Naive thymus-derived CD4-positive, alpha-beta T cell (primary cell): ENCODE measurements at regions of chr6 and their contacts with region 1.

Region 1: DNA sequence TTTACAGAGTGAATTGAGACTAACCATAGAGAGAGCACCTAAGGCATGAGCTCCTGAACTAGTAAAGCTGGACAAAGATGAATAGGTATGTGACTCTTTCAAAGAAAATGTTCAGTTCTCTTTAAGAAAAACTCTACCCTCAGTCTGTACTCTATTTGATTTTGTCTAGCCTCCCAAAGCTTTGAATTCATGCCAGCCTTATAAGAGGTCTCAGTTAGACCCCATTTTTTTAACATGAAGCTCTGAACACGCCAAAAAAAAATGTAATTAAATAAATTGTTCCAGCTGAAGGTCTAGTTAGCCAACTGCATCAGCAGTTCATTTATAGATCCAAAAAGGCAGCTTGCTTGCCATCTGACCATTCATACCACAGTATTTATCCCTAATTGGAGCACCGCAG is 71.6 kb downstream of the COL9A1 start:
- DNase-seq: no peak
- ATAC-seq: no peak
- H3K4me3 ChIP-seq: no peak overlapping the region
- H3K4me3 Mint-ChIP-seq: no peak overlapping the region
- H3K27ac ChIP-seq: no peak overlapping the region
- H3K27ac Mint-ChIP-seq: no peak overlapping the region
- H3K4me1 ChIP-seq: no peaks in the 10 kb centered on the region
- H3K4me1 Mint-ChIP-seq: no peaks in the 10 kb centered on the region
- H3K27me3 ChIP-seq: no peaks in the 10 kb centered on the region
- H3K27me3 Mint-ChIP-seq: peaks cover 0 to 10% (median 0%) of the 10 kb centered on the region in 5 donors

Region 2: DNA sequence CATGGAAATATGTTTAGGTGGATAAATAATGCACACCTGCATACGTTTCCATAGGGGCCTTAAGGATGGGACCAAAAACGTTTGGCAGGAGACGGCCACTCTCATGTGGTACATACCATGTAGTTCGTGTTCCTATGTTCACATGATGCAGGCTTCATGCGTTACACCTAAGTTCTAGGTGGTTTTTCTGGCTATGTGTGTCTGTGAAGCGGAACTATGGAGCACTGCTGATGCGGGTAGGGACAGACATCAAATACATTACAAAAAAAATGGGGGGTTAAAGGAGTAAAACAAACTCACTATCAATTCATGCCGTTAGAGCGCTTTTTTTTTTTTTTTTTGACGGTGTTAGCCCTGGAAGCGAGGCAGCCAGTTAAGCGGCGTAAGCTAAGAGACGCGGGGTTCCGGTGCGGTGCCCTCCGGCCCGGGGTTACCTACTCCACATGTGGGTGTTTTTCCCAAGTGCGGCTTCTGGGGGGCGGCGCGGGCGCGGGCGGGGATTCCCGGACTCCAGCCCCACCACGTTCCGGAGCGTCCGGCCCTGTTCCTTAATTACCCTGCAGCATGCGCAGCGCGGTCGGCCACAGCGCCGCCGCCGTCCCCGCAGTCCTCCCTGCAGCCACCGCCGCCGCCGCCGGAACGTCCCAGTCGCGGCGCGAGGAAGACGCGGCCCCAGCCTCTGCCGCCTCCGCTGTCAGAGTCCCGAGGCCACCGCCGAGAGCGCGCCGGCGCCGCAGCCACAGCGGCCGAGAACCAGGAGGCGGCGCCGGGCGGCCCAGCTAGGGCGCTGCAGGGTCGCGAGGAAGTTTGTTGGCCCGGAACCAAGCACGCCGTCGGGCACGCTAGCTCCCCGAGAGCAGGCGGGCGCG is 364.3 kb before region 1 on chr6:
- CTCF ChIA-PET with region 1: no interaction called
- POLR2A ChIA-PET with region 1: no interaction called
- intact Hi-C with region 1: no loop called
- DNase-seq: peak; percentile 42 to 64 (median 55)
- ATAC-seq: peak; percentile 84
- H3K4me3 ChIP-seq: peak overlapping the region; percentile 55
- H3K4me3 Mint-ChIP-seq: peak overlapping the region; percentile 79 to 98 (median 89)
- H3K27ac ChIP-seq: peak overlapping the region; percentile 4
- H3K27ac Mint-ChIP-seq: peak overlapping the region in 7 of 9 donors; percentile 15 to 85 (median 51)
- H3K4me1 ChIP-seq: peaks cover 5 to 6% of the 10 kb centered on the region in 2 donors
- H3K4me1 Mint-ChIP-seq: peaks cover 15 to 24% (median 20%) of the 10 kb centered on the region in 7 donors
- H3K27me3 ChIP-seq: no peaks in the 10 kb centered on the region
- H3K27me3 Mint-ChIP-seq: peaks cover 8 to 66% (median 34%) of the 10 kb centered on the region in 5 donors

Region 3: GRCh38 chr6:70221025-70221714 is 10.1 kb before region 1 on chr6:
- CTCF ChIA-PET with region 1: interaction called, 10 read pairs
- POLR2A ChIA-PET with region 1: no interaction called
- intact Hi-C with region 1: no loop called
- DNase-seq: peak in 4 of 9 donors; percentile 3 to 16 (median 11)
- ATAC-seq: peak; percentile 50
- H3K4me3 ChIP-seq: no peak overlapping the region
- H3K4me3 Mint-ChIP-seq: no peak overlapping the region
- H3K27ac ChIP-seq: no peak overlapping the region
- H3K27ac Mint-ChIP-seq: no peak overlapping the region
- H3K4me1 ChIP-seq: no peaks in the 10 kb centered on the region
- H3K4me1 Mint-ChIP-seq: peaks cover 0 to 1% (median 0%) of the 10 kb centered on the region in 7 donors
- H3K27me3 ChIP-seq: no peaks in the 10 kb centered on the region
- H3K27me3 Mint-ChIP-seq: peaks cover 4 to 31% (median 7%) of the 10 kb centered on the region in 5 donors